Activated naive CD4-positive, alpha-beta T cell treated with anti-CD3 and anti-CD28 coated beads for 36 hours (primary cell): ENCODE measurements at regions of chr6 and their contacts with region 1.

Region 1: DNA sequence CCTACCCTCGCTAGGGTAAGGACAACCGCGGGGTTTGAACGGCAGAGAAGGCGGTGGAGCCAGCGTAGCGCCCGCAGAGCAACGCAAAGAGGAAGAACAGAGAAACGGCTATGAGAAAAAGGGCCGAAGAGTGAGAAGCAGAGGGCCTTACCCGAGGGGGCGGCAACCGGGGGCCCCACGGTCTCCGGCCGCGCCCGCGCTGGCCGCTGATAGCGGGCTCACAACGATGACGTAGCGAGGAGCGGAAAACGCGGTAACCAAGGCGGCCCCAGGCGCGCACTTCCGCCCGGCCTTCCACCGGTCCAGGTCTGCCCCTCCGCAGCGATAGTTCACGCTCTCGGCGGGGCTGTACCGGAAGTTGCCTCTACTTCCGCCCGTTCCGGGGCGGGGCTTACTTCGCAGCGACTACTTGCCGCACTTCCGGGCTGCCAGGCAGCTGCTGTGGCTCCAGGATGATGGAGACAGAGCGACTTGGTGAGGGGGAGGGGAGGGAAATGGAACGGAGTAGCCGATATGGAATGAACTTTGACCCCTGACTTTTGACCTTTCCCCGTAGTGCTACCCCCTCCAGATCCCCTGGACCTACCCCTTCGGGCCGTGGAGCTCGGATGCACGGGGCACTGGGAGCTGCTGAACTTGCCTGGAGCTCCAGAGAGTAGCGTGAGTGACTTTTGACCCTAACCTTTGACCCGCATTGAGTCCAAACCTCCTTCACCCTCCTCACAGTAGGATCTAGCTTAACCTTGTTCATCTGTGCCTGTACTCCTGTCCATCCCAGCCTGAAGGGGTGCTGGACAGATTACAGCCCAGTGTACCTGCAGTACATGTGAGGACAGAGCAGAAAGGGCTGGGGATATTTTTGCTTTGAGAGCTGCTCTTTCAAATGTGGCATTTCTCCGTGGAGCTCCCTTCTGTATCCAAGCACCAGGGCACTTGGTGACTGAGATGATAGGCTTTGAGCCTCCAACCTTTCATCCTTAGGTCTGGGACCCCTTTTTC is at the starts of genes NELFE and SKIC2:
- DNase-seq: peak; percentile 99
- H3K4me3 Mint-ChIP-seq: peak within 1 kb of the TSS; percentile 95
- H3K27ac Mint-ChIP-seq: peak within 1 kb of the TSS; percentile 94
- H3K4me1 Mint-ChIP-seq: peaks cover 41% of the 10 kb centered on the region
- H3K27me3 Mint-ChIP-seq: no peaks in the 10 kb centered on the region
- total RNA-seq, gene NELFE: 83.2 to 87.4 TPM
- total RNA-seq, gene SKIC2: 93.6 to 101 TPM

Region 2: DNA sequence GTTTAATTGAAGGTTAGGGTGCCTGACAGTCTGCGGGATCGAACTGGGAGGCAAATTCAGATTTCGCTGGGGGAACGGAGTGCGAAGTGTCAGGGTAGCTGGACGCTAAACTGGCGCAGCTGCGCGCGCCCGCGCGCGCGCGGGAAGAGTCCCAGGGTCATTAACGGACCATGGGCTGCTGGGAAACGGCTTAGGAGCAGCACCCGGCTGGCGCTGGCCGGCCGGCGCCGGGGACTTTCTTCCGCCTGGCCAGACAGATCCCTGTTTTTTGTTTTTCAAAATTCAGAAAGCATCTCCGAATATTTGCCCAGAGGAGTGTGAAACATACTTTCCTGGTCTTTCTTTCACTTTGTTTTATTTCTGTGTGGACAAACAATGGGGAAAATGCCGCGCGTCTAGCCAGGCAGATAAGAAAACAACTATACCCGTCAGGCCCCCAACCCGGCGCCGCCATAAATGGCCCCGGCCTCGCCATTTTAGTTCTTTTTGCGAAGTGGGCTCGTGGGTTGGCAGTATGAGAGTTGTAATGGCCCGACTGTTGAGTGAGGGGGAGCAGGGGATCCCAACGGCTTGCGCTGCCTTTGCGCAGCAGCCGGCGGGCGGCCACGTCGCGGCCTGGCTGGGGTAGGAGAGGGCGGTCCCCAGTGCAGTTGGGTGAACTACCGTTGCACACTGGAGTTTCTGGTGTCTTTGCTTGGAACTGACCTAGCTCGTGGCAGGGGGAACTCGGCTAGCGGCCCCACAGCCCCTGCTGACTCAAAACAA is 124.4 kb before region 1 on chr6:
- CTCF ChIA-PET with region 1: no interaction called
- intact Hi-C with region 1: loop called (anchors 5 kb)
- DNase-seq: peak; percentile 80
- H3K4me3 Mint-ChIP-seq: peak overlapping the region; percentile 94
- H3K27ac Mint-ChIP-seq: peak overlapping the region; percentile 98
- H3K4me1 Mint-ChIP-seq: peaks cover 46% of the 10 kb centered on the region
- H3K27me3 Mint-ChIP-seq: no peaks in the 10 kb centered on the region

Region 3: GRCh38 chr6:31901953-31902643 is 56.9 kb before region 1 on chr6 and contains the start of gene ZBTB12:
- CTCF ChIA-PET with region 1: interaction called, 3 read pairs
- intact Hi-C with region 1: loop called (anchors 1 kb)
- DNase-seq: peak; percentile 87
- H3K4me3 Mint-ChIP-seq: peak within 1 kb of the TSS; percentile 82
- H3K27ac Mint-ChIP-seq: peak within 1 kb of the TSS; percentile 81
- H3K4me1 Mint-ChIP-seq: peaks cover 29% of the 10 kb centered on the region
- H3K27me3 Mint-ChIP-seq: no peaks in the 10 kb centered on the region
- total RNA-seq, gene ZBTB12: 0.57 to 0.69 TPM

Region 4: GRCh38 chr6:31971993-31972708 is 13.1 kb after region 1 on chr6 and contains the start of gene DXO:
- CTCF ChIA-PET with region 1: interaction called, 4 read pairs
- intact Hi-C with region 1: loop called (anchors 1 kb)
- DNase-seq: peak; percentile 99
- H3K4me3 Mint-ChIP-seq: peak within 1 kb of the TSS; percentile 98
- H3K27ac Mint-ChIP-seq: peak within 1 kb of the TSS; percentile 100
- H3K4me1 Mint-ChIP-seq: peaks cover 41% of the 10 kb centered on the region
- H3K27me3 Mint-ChIP-seq: no peaks in the 10 kb centered on the region
- total RNA-seq, gene DXO: 12.5 to 13.0 TPM

Region 5: GRCh38 chr6:32666420-32667300 is 707.6 kb after region 1 on chr6 and contains the start of gene HLA-DQB1:
- CTCF ChIA-PET with region 1: no interaction called
- intact Hi-C with region 1: no loop called
- DNase-seq: peak; percentile 80
- H3K4me3 Mint-ChIP-seq: peak within 1 kb of the TSS; percentile 70
- H3K27ac Mint-ChIP-seq: no peak within 1 kb of the TSS
- H3K4me1 Mint-ChIP-seq: peaks cover 40% of the 10 kb centered on the region
- H3K27me3 Mint-ChIP-seq: peaks cover 32% of the 10 kb centered on the region
- total RNA-seq, gene HLA-DQB1: 6.2 to 7.4 TPM